Activated T-helper 1 cell treated with anti-CD3 and anti-CD28 coated beads, Interleukin-12 subunit alpha, Interleukin-12 subunit beta, Interleukin-2, Interleukin-4 antibody, amounts not matched to agents 30 ng/mL and 10 ng/mL and 1 ng/mL, durations not matched to agents 14 hours and 24 hours and 36 hours (primary cell): ENCODE measurements at regions of chr10 and their contacts with region 1.

Region 1: GRCh38 chr10:88932539-88933256 is 19.9 kb downstream of the ACTA2 start:
- DNase-seq: peak; percentile 30
- H3K4me3 Mint-ChIP-seq: no peak overlapping the region
- H3K27ac Mint-ChIP-seq: no peak overlapping the region
- H3K4me1 Mint-ChIP-seq: peaks cover 36% of the 10 kb centered on the region
- H3K27me3 Mint-ChIP-seq: no peaks in the 10 kb centered on the region

Region 2: GRCh38 chr10:88565072-88565471 is 367.6 kb before region 1 on chr10:
- intact Hi-C with region 1: loop called (anchors 1 kb)
- DNase-seq: no peak
- H3K4me3 Mint-ChIP-seq: no peak overlapping the region
- H3K27ac Mint-ChIP-seq: no peak overlapping the region
- H3K4me1 Mint-ChIP-seq: peaks cover 4% of the 10 kb centered on the region
- H3K27me3 Mint-ChIP-seq: peaks cover 18% of the 10 kb centered on the region

Region 3: GRCh38 chr10:88835096-88835909 is 97.4 kb before region 1 on chr10:
- intact Hi-C with region 1: loop called (anchors 1 kb)
- DNase-seq: peak; percentile 81
- H3K4me3 Mint-ChIP-seq: no peak overlapping the region
- H3K27ac Mint-ChIP-seq: no peak overlapping the region
- H3K4me1 Mint-ChIP-seq: peaks cover 33% of the 10 kb centered on the region
- H3K27me3 Mint-ChIP-seq: no peaks in the 10 kb centered on the region

Region 4: GRCh38 chr10:88889559-88890337 is 43.0 kb before region 1 on chr10:
- intact Hi-C with region 1: no loop called
- DNase-seq: no peak
- H3K4me3 Mint-ChIP-seq: no peak overlapping the region
- H3K27ac Mint-ChIP-seq: no peak overlapping the region
- H3K4me1 Mint-ChIP-seq: peaks cover 60% of the 10 kb centered on the region
- H3K27me3 Mint-ChIP-seq: no peaks in the 10 kb centered on the region

Region 5: DNA sequence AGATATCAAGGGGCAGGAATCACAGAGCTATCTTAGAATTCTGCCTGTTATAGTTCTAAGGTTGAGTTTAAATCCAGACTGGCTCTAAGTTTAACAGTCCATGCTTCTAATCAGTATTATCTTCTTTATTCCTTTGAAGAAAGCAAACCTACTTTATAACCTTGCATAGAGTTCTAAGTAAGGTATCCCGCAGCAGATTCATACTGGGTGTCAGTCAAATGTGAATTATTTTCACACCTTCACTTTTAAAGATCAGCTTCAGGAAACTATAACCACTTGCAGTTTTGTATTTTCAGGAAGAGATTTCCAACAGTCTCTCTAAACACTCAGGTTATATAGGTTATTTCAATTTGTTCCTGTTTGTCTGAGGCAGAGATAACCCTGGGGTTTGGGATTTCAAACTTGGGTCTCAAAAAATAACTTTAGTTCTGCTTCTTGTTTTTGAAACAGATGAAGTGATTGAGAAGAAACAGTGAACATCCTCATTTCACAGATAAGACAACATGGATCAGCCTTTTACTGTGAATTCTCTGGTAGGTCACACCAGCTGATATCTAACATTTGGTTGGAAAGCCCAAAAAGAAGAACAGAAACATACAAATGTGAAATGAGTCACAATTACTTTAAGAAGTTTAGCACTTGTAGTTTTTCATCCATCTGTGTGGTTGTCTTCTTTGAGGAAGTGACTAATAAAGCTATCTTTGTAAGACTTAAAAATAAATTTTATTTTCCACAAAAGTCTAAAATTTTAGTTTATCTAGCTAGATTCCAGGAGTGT is 31.3 kb before region 1 on chr10:
- intact Hi-C with region 1: loop called (anchors 2 kb)
- DNase-seq: no peak
- H3K4me3 Mint-ChIP-seq: peak overlapping the region; percentile 73
- H3K27ac Mint-ChIP-seq: peak overlapping the region; percentile 89
- H3K4me1 Mint-ChIP-seq: peaks cover 68% of the 10 kb centered on the region
- H3K27me3 Mint-ChIP-seq: no peaks in the 10 kb centered on the region

Region 6: GRCh38 chr10:89019569-89020327 is 87.0 kb after region 1 on chr10:
- intact Hi-C with region 1: no loop called
- DNase-seq: no peak
- H3K4me3 Mint-ChIP-seq: no peak overlapping the region
- H3K27ac Mint-ChIP-seq: no peak overlapping the region
- H3K4me1 Mint-ChIP-seq: no peaks in the 10 kb centered on the region
- H3K27me3 Mint-ChIP-seq: no peaks in the 10 kb centered on the region

Region 7: GRCh38 chr10:89029785-89030437 is 97.2 kb after region 1 on chr10:
- intact Hi-C with region 1: loop called (anchors 1 kb)
- DNase-seq: peak; percentile 50
- H3K4me3 Mint-ChIP-seq: no peak overlapping the region
- H3K27ac Mint-ChIP-seq: no peak overlapping the region
- H3K4me1 Mint-ChIP-seq: peaks cover 31% of the 10 kb centered on the region
- H3K27me3 Mint-ChIP-seq: peaks cover 2% of the 10 kb centered on the region

Region 8: DNA sequence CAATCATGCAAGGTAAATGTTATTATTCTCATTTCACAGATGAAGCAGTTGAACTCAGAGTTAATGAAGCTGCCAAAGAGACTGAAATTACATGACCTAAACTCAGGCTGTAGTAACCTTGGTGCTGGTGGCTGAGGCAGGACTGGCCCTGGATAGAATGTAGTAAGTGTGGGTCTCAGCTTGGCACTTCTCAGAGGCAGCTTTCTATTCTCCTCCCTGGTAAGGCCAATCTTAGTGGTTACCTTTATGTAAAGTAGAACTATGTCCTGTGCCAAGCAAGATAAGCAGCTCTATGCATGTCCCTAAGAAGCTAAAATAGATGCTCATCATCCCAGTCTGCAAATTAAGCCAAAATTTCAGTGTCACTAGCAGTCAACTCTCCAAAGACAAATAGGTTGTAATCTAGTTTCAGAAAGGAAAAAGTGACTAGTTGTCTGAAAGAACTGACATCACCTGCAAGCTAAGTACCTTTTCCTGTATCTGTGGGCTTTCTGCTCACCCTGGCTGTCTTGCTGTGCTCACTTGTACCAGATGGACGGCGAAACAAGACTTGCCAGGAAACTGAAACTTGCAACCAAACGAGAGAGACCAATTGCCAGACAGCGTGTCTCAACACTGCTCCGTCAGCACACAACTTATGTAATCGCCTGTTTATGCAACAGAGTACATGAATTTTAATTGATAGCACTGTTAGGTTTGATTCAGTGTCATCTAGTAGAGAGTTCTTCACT is 230.7 kb after region 1 on chr10:
- intact Hi-C with region 1: loop called (anchors 5 kb)
- DNase-seq: peak; percentile 56
- H3K4me3 Mint-ChIP-seq: peak overlapping the region; percentile 57
- H3K27ac Mint-ChIP-seq: peak overlapping the region; percentile 76
- H3K4me1 Mint-ChIP-seq: peaks cover 35% of the 10 kb centered on the region
- H3K27me3 Mint-ChIP-seq: peaks cover 41% of the 10 kb centered on the region